HEK293T (cell line): ENCODE measurements at regions of chr6 and their contacts with region 1.

Region 1: DNA sequence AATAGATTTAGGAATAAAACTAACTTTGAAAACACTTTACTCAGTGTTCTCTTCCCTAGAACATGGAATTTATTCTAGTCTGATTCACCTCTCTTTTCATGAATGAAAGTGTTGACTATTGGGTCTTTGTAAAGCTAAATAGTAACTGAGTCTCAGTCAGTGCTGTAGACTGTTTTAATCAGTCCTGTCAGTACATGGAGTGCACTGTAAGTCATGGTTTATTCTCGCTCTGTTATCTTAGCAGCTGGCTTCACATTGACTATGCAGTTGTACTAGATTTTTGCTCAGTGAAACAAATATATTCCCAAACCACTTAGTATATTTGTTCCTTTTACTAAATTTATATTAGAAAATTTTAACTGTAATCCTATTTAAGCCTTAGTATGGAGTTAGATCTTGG is 15.1 kb upstream of the ACAT2 start:
- DNase-seq: no peak

Region 2: GRCh38 chr6:159720708-159721107 is 26.1 kb before region 1 on chr6:
- CTCF ChIA-PET with region 1: no interaction called
- POLR2A ChIA-PET with region 1: no interaction called
- DNase-seq: peak; percentile 32

Region 3: GRCh38 chr6:159761873-159762680 is 15.3 kb after region 1 on chr6 and contains the start of gene ACAT2:
- CTCF ChIA-PET with region 1: no interaction called
- POLR2A ChIA-PET with region 1: interaction called, 14 read pairs
- DNase-seq: peak; percentile 99

Region 4: GRCh38 chr6:159806021-159806458 is 59.3 kb after region 1 on chr6:
- CTCF ChIA-PET with region 1: interaction called, 10 read pairs
- POLR2A ChIA-PET with region 1: no interaction called
- DNase-seq: no peak

Region 5: DNA sequence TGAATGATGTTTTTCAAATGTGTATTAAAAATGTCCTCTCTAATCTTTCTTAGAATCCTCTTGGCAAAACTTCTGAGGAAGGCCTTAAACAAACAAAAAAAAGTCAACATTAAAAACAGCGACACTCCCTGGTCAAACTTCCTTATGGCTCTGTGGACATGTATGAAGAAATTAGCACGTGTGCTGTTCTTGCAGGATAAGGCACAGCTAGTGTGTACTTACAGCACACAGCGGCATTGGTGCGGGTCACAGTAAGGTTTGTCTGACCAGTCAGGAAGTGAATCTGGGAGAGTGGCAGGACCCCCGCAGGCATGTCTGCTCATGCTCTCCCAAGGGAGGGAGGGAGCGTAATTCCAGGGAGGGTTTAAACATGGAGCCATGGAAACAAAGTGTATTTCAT is 413.7 kb after region 1 on chr6:
- CTCF ChIA-PET with region 1: no interaction called
- POLR2A ChIA-PET with region 1: no interaction called
- DNase-seq: no peak